T-cell (primary cell): ENCODE measurements at regions of chr10 and their contacts with region 1.

Region 1: GRCh38 chr10:14822879-14823755 is 14.7 kb downstream of the CDNF start:
- DNase-seq: peak in 30 of 35 experiments; percentile 5 to 63 (median 31)
- ATAC-seq: peak in 3 of 4 experiments; percentile 36 to 70 (median 61)
- H3K4me3 ChIP-seq: no peak overlapping the region
- H3K4me3 Mint-ChIP-seq: no peak overlapping the region
- H3K27ac ChIP-seq: no peak overlapping the region
- H3K27ac Mint-ChIP-seq: peak overlapping the region in 1 of 2 donors; percentile 76
- H3K4me1 ChIP-seq: no peaks in the 10 kb centered on the region
- H3K4me1 Mint-ChIP-seq: peaks cover 0 to 26% (median 5%) of the 10 kb centered on the region in 3 donors
- H3K27me3 ChIP-seq: no peaks in the 10 kb centered on the region
- H3K27me3 Mint-ChIP-seq: no peaks in the 10 kb centered on the region

Region 2: DNA sequence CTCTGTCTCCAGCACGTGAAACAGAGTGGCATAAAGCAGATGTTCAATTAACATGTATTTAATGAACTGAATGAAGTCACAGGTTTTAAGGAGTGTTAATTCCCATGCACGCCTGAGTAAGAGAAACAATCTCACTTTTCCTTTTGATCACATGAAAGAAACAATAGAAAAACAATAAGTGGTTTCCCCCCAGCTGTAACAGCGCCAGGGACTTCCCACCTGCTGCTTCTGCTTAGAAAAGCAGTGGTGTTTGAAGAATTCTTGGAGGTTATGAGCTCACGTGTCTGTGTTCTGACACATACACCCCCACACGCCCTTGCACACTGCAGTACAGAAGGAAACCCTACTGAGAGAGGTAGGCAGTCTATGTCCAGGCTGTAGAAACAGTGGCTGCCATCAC is 441.1 kb before region 1 on chr10:
- CTCF ChIA-PET with region 1: interaction called in 1 of 2 experiments, 10 read pairs
- POLR2A ChIA-PET with region 1: no interaction called
- DNase-seq: peak in 33 of 35 experiments; percentile 1 to 72 (median 43)
- ATAC-seq: peak; percentile 76 to 98 (median 88)
- H3K4me3 ChIP-seq: no peak overlapping the region
- H3K4me3 Mint-ChIP-seq: peak overlapping the region in 1 of 3 donors; percentile 38
- H3K27ac ChIP-seq: no peak overlapping the region
- H3K27ac Mint-ChIP-seq: peak overlapping the region in 1 of 2 donors; percentile 2
- H3K4me1 ChIP-seq: peaks cover 20 to 30% of the 10 kb centered on the region in 2 experiments
- H3K4me1 Mint-ChIP-seq: peaks cover 29 to 62% (median 56%) of the 10 kb centered on the region in 3 donors
- H3K27me3 ChIP-seq: peaks cover 0 to 11% of the 10 kb centered on the region in 2 experiments
- H3K27me3 Mint-ChIP-seq: peaks cover 0 to 1% of the 10 kb centered on the region in 2 donors

Region 3: DNA sequence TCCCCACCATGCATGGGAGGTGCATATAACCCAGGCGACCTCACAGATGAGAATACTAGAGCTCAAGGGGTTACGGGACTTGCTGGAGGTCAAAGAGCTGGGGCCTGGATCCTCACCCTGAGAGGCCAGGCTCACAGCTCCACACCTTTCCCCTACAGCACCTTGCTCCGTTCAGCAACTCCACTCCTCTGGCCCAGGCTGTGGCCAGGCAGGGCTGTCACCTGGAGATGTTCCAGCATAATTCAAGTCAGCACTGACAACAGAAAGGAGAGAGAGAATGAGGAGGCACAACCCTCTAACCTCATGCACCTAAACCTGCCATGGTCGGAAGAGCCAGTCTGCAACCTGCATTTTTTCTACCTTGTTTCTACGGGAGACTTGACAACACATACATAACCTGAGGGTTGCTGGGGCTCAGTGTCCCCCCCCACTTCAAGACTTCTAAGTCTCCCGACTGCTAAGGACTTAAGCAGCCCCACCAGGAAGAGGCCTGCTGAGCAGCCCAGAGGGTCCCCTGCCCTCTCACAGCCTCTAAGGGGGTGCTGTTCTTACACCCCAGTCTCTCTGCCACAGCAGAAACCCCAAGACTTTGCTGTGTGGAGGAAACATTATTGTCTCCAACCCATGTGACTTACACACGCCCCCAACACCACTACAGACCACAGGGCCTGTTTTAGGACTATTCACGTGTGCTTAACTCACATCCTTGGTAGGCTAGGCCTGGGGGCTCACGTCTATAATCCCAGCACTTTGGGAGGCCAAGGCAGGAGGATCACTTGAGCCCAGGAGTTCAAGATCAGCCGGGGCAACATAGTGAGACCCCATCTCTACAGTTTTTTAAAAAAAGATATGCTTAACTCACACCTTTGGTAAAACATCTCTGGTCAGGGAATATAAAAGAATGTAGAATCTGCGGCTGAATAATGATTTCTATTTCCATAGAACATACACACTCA is 224.0 kb before region 1 on chr10:
- CTCF ChIA-PET with region 1: no interaction called
- POLR2A ChIA-PET with region 1: interaction called, 6 to 10 read pairs
- DNase-seq: peak in 9 of 35 experiments; percentile 9 to 61 (median 47)
- ATAC-seq: peak in 1 of 4 experiments; percentile 56
- H3K4me3 ChIP-seq: no peak overlapping the region
- H3K4me3 Mint-ChIP-seq: peak overlapping the region in 1 of 3 donors; percentile 92
- H3K27ac ChIP-seq: peak overlapping the region; percentile 44
- H3K27ac Mint-ChIP-seq: peak overlapping the region; percentile 82 to 83
- H3K4me1 ChIP-seq: peaks cover 20 to 56% of the 10 kb centered on the region in 2 experiments
- H3K4me1 Mint-ChIP-seq: peaks cover 84 to 93% (median 88%) of the 10 kb centered on the region in 3 donors
- H3K27me3 ChIP-seq: no peaks in the 10 kb centered on the region
- H3K27me3 Mint-ChIP-seq: no peaks in the 10 kb centered on the region

Region 4: DNA sequence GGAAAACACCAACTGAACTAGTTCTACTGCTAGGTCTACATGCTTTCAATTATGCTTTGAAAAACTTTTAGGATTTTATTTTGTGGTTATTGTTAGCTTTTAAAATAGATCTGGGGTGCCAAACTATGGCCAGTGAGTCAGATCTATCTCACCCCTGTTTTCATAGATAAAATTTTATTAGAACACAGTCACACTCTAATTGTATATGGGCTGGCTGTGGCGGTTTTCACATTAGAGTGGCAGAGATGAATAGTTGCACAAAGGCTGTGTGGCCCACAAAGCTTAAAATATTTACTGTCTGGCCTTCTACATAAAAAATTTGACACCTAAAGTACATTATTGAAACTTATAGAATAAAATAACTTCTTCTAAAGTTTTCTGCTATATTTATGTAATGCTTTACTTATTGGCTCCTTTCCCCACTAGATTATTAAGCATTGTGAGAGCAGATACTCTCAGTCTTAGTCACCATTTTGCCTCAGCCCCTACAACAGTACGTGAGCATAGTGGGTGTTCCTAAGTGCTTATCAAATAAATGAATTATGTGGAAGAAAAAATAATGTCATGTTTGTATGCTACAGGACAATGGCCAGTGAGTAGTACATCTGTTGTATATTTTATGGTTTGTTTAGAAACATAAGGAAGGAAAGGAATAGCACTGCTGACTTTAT is 50.1 kb after region 1 on chr10:
- CTCF ChIA-PET with region 1: no interaction called
- POLR2A ChIA-PET with region 1: interaction called in 1 of 2 experiments, 13 read pairs
- DNase-seq: no peak
- ATAC-seq: no peak
- H3K4me3 ChIP-seq: no peak overlapping the region
- H3K4me3 Mint-ChIP-seq: no peak overlapping the region
- H3K27ac ChIP-seq: no peak overlapping the region
- H3K27ac Mint-ChIP-seq: no peak overlapping the region
- H3K4me1 ChIP-seq: peaks cover 3 to 5% of the 10 kb centered on the region in 2 experiments
- H3K4me1 Mint-ChIP-seq: peaks cover 16 to 21% (median 18%) of the 10 kb centered on the region in 3 donors
- H3K27me3 ChIP-seq: no peaks in the 10 kb centered on the region
- H3K27me3 Mint-ChIP-seq: no peaks in the 10 kb centered on the region